Spleen (tissue), 13 donors: ENCODE measurements at regions of chr1 and their contacts with region 1.

Region 1: GRCh38 chr1:200139661-200140250 is 112.2 kb downstream of the NR5A2 start:
- DNase-seq: no peak
- H3K4me3 ChIP-seq: no peak overlapping the region
- H3K27ac ChIP-seq: no peak overlapping the region
- H3K4me1 ChIP-seq: peaks cover 0 to 2% (median 0%) of the 10 kb centered on the region in 6 donors
- H3K27me3 ChIP-seq: no peaks in the 10 kb centered on the region
- CTCF ChIP-seq: peak; percentile 34 to 81 (median 65)
- POLR2A ChIP-seq: no peak

Region 2: GRCh38 chr1:199843861-199844260 is 295.9 kb before region 1 on chr1:
- intact Hi-C with region 1: no loop called
- DNase-seq: no peak
- H3K4me3 ChIP-seq: no peak overlapping the region
- H3K27ac ChIP-seq: no peak overlapping the region
- H3K4me1 ChIP-seq: no peaks in the 10 kb centered on the region
- H3K27me3 ChIP-seq: no peaks in the 10 kb centered on the region
- CTCF ChIP-seq: no peak
- POLR2A ChIP-seq: no peak

Region 3: DNA sequence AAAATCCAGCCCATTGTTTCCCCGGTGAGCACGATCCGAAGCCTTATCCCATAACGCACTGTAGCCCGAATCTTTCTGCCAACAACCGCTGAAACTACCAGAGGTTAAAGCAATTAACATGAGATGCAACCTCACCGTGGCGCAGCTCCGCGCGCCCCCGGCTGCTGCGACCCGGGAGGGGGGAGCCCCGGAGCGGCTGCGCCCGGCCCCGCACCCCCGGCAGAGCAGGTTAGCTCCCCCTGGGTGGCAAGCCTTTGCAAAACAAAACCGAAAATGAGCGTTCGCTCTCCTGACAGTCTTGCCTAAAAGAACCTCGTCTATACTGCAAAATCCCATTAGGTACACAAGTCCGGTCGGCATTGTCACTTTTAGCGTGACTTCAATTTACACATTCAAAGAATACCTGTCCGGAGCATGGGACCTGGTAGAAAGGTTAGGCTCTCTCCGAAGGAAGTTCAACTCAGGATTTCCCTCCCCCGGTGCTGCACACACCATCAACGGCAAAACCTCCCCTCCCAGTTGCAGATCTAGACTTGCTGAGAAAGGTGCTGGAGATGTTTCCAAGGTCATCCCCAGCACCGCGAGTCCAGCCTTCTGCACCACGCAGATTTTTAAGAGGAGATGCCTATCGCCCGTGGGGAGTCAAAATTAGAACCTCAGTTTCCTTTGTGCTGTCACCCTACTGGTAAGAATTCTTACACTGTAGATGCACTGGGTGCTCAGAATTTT is 162.6 kb after region 1 on chr1:
- intact Hi-C with region 1: loop called (anchors 10 kb)
- DNase-seq: peak; percentile 91
- H3K4me3 ChIP-seq: peak overlapping the region; percentile 42 to 88 (median 61)
- H3K27ac ChIP-seq: peak overlapping the region in 7 of 8 donors; percentile 12 to 80 (median 59)
- H3K4me1 ChIP-seq: peaks cover 3 to 64% (median 35%) of the 10 kb centered on the region in 6 donors
- H3K27me3 ChIP-seq: no peaks in the 10 kb centered on the region
- CTCF ChIP-seq: peak in 1 of 11 experiments; percentile 20
- POLR2A ChIP-seq: no peak

Region 4: GRCh38 chr1:200351826-200352549 is 212.2 kb after region 1 on chr1:
- intact Hi-C with region 1: no loop called
- DNase-seq: no peak
- H3K4me3 ChIP-seq: peak overlapping the region in 1 of 8 donors; percentile 33
- H3K27ac ChIP-seq: peak overlapping the region in 7 of 8 donors; percentile 11 to 90 (median 79)
- H3K4me1 ChIP-seq: peaks cover 0 to 53% (median 27%) of the 10 kb centered on the region in 6 donors
- H3K27me3 ChIP-seq: no peaks in the 10 kb centered on the region
- CTCF ChIP-seq: no peak
- POLR2A ChIP-seq: no peak

Region 5: DNA sequence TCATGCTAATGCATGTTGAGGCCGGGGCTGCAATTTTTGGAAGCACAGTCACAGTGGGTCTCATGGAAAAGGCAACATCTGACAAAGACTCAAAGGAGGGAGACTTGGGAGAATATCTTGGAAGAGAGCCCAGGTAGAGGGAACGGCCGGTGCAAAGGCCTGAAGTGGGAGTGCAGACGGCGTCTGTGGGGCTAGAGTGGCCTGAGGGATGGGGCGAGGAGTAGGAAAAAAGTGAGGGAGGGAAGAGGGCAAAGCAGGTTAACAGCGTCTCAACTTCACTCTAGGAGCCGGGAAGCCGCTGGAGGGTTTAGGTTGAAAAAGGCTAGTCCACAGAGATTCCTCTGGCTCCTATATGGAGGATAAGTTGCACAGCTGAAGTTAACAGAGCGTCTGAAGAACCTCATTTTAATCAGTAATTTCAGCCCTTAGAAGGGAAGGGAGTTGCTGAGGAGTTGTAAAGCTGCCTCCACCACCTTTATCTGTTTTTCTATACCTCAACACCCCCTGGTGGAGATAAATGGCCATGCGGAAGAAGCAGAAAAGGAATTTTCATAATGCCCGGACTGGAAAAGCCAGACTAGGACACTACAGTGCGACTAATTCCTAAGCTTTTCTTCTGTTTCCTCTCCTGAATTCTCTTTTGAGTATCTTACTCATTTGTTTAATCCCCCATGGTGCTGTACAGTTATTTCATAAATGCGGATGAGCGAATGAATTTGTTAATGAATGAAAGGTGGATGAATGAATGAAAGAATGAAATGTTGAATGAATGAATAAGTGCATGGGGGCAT is 348.8 kb after region 1 on chr1:
- intact Hi-C with region 1: loop called (anchors 5 kb)
- DNase-seq: no peak
- H3K4me3 ChIP-seq: no peak overlapping the region
- H3K27ac ChIP-seq: no peak overlapping the region
- H3K4me1 ChIP-seq: peaks cover 0 to 8% (median 2%) of the 10 kb centered on the region in 6 donors
- H3K27me3 ChIP-seq: peaks cover 0 to 10% (median 0%) of the 10 kb centered on the region in 7 donors
- CTCF ChIP-seq: peak; percentile 67 to 87 (median 81)
- POLR2A ChIP-seq: no peak